Posterior vena cava (tissue), 2 donors: ENCODE measurements at regions of chr3 and their contacts with region 1.

Region 1: GRCh38 chr3:31908391-31909097 is 72.5 kb downstream of the OSBPL10 start:
- DNase-seq: no peak

Region 2: DNA sequence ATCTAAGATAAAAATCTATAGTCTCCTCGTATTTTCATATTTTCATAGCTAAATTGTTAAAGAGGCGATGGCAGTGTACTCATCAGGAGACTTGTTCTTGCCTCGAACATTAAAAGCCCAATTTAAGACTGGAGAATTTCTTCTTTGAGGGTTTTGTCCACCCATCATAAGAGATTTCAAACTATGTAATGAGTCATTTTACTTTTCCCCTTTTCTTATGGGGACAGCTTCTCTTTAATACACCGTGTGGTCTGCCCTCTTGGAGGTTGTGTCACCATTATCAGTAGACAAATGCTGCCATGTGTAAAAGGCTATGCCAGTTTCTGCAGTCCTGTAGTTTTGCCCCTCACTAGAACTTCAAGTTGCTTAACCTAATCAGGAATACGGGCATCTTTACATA is 1285.2 kb before region 1 on chr3:
- intact Hi-C with region 1: no loop called
- DNase-seq: no peak

Region 3: GRCh38 chr3:31936420-31937060 is 28.0 kb after region 1 on chr3:
- intact Hi-C with region 1: loop called in 1 of 2 experiments (anchors 1 kb)
- DNase-seq: no peak